ENCODE measurements at regions of chr6 and their contacts with region 1.

Region 1: GRCh38 chr6:28895134-28895812 is 28.5 kb downstream of the TRIM27 start:
- DNase-seq: peak; percentile 68 to 95 (median 89)

Region 2: GRCh38 chr6:28940858-28941680 is 45.8 kb after region 1 on chr6:
- intact Hi-C with region 1: loop called (anchors 5 kb)
- DNase-seq: peak; percentile 49 to 94 (median 77)

Region 3: DNA sequence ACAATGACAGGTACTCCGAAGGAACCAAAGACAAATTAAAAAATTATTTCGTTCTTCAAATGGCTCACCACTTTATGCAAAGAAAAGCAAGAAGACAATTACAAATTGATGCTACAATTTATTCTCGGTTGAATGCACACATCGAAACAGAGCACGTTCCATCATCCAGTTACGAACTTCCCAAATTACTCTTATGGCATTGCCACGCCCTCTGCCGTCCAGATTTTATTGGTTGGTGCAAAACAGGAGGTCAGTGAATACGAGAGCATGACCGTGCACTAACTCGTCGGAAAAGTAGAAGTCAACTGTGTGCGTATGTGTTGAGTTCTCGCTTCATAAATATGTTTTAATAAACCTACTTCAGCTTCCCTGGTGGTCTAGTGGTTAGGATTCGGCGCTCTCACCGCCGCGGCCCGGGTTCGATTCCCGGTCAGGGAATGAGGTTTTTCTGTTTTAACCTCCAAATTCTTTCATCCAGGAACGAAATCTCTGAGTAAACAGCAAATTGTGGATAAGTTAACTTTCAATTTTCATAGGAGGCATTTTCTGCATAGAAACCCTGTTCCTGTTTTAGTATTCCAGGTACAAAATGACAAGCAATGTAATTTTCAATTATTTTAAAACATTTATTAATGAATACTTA is 86.7 kb after region 1 on chr6:
- intact Hi-C with region 1: loop called (anchors 5 kb)
- DNase-seq: peak; percentile 21 to 91 (median 73)

Region 4: DNA sequence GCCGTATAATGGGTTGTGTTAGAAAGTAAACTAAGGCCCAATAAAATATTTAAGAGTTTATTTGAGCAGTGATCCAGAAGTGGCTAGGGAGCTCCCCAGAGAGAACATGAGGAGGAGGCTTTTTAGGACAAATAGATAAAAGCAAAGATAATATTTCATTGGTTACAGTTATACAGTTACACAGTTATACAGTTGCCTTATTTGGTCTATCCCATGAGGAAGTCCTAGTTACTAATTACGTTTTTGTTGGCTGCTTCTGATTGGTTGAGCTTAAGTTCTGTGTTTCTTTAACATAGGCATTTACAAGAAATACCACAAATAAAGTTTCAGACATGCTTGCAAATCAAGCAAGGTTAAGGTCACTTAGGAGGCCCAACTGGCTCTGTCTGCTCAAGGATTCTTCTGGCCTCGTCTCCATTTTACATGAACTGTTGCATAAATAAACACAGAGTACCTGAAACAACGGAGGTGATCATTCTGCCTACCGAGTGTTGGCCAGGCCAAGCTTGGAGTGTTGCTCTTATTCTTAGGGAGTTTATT is 657.3 kb after region 1 on chr6:
- intact Hi-C with region 1: no loop called
- DNase-seq: peak in 2 of 42 donors; percentile 7 to 24